ENCODE measurements at regions of chr3 and their contacts with region 1.

Region 1: DNA sequence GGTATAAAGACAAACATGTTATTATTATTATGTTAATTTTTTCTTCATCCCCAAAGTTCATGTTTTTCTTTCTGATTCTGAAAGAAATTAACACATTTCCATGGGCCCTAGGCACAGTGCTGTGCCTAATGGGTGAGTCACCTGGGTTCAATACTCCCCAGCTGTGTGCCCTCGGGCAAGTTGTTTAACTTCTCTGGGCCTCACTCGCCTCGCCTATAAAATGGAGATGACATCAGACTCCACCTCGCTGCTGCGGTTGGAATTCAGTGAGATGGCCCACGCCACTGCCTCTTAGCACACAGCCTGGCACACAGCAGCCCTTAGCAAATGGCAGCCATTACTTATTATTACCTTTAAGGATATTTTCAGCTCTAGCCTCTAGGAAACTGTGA is 22.6 kb downstream of the DNASE1L3 start:
- DNase-seq: no peak
- H3K4me3 ChIP-seq: no peak overlapping the region
- H3K27ac ChIP-seq: no peak overlapping the region
- H3K4me1 ChIP-seq: no peaks in the 10 kb centered on the region
- H3K27me3 ChIP-seq: no peaks in the 10 kb centered on the region
- CTCF ChIP-seq: no peak
- POLR2A ChIP-seq: no peak

Region 2: GRCh38 chr3:58200846-58201355 is 12.7 kb after region 1 on chr3:
- CTCF ChIA-PET with region 1: interaction called, 37 read pairs
- POLR2A ChIA-PET with region 1: no interaction called
- dilution Hi-C with region 1: no loop called
- intact Hi-C with region 1: no loop called
- DNase-seq: peak; percentile 51
- H3K4me3 ChIP-seq: no peak overlapping the region
- H3K27ac ChIP-seq: no peak overlapping the region
- H3K4me1 ChIP-seq: peaks cover 21% of the 10 kb centered on the region
- H3K27me3 ChIP-seq: no peaks in the 10 kb centered on the region
- CTCF ChIP-seq: no peak
- POLR2A ChIP-seq: no peak

Region 3: GRCh38 chr3:58231666-58232065 is 43.5 kb after region 1 on chr3:
- CTCF ChIA-PET with region 1: interaction called, 12 read pairs
- POLR2A ChIA-PET with region 1: no interaction called
- dilution Hi-C with region 1: no loop called
- intact Hi-C with region 1: no loop called
- DNase-seq: no peak
- H3K4me3 ChIP-seq: no peak overlapping the region
- H3K27ac ChIP-seq: no peak overlapping the region
- H3K4me1 ChIP-seq: peaks cover 2% of the 10 kb centered on the region
- H3K27me3 ChIP-seq: peaks cover 8 to 12% of the 10 kb centered on the region in 2 experiments
- CTCF ChIP-seq: no peak
- POLR2A ChIP-seq: no peak

Region 4: GRCh38 chr3:58271901-58272501 is 83.8 kb after region 1 on chr3:
- CTCF ChIA-PET with region 1: interaction called, 28 read pairs
- POLR2A ChIA-PET with region 1: no interaction called
- dilution Hi-C with region 1: no loop called
- intact Hi-C with region 1: no loop called
- DNase-seq: peak; percentile 79
- H3K4me3 ChIP-seq: no peak overlapping the region
- H3K27ac ChIP-seq: peak overlapping the region; percentile 55
- H3K4me1 ChIP-seq: peaks cover 19% of the 10 kb centered on the region
- H3K27me3 ChIP-seq: no peaks in the 10 kb centered on the region
- CTCF ChIP-seq: no peak
- POLR2A ChIP-seq: no peak

Region 5: GRCh38 chr3:58305882-58306711 is 117.9 kb after region 1 on chr3 and contains the starts of genes HTD2 and RPP14:
- CTCF ChIA-PET with region 1: interaction called, 369 read pairs
- POLR2A ChIA-PET with region 1: interaction called, 3 read pairs
- dilution Hi-C with region 1: loop called (anchors 10 kb)
- intact Hi-C with region 1: no loop called
- DNase-seq: peak; percentile 98
- H3K4me3 ChIP-seq: peak within 1 kb of the TSS; percentile 81 to 98 (median 94)
- H3K27ac ChIP-seq: peak within 1 kb of the TSS; percentile 96
- H3K4me1 ChIP-seq: peaks cover 19% of the 10 kb centered on the region
- H3K27me3 ChIP-seq: peaks cover 15 to 16% of the 10 kb centered on the region in 2 experiments
- CTCF ChIP-seq: peak; percentile 98
- POLR2A ChIP-seq: peak; percentile 92
- total RNA-seq, gene HTD2: 10.0 and 10.3 TPM in 2 replicates
- total RNA-seq, gene RPP14: 18.1 and 21.3 TPM in 2 replicates